ENCODE measurements at regions of chr13 and their contacts with region 1.

Region 1: DNA sequence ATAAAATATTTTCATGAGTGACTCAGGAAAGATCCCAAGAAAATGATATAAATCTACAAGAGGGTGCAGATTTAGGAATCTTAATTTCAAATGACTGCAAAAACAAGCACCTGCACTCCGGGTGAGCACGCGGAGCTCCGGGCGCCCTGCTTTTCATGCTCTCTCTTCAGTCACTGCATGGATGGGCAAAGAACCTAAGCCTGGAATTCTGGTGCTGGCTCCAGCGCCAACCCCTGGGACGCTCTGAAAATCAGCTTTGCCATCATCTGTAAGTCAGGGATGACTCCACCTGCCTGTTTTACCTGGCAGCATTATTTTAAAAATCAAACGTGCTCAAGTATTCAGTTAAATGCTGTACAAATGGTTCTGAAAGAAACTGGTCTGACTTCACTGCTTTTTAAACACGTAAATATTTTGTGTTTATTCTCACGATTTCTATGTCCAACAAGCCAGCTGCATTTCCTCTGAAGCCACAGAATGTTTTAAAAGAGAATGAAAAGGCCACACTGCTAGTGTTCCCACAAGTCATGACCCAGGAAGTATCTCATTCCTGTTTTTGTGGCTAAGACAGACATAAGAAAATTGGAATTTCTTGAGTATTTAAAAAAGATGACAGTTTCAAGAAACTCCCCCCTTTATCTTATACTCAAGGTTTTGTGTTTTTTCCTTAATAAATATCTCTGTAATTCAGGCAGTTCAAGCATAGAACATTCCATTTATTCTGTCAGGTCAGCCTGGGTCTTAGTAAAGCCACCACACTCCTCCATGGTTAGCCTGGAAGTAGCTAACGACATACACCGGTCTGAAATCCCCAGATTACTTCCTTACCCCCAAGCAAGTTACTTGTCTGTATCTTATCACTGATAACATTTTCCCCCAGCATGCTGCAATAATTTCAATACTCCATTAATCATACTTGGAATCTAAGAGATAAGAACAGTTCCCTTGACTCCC is 81.1 kb downstream of the COL4A1 start:
- DNase-seq: no peak
- H3K4me3 ChIP-seq: no peak overlapping the region
- H3K27ac ChIP-seq: peak overlapping the region in 2 of 3 donors; percentile 19 to 31
- H3K4me1 ChIP-seq: peaks cover 4 to 18% of the 10 kb centered on the region in 2 donors
- H3K27me3 ChIP-seq: no peaks in the 10 kb centered on the region
- CTCF ChIP-seq: no peak
- POLR2A ChIP-seq: no peak

Region 2: GRCh38 chr13:110330491-110331001 is 104.7 kb after region 1 on chr13:
- intact Hi-C with region 1: no loop called
- DNase-seq: peak; percentile 42
- H3K4me3 ChIP-seq: no peak overlapping the region
- H3K27ac ChIP-seq: peak overlapping the region; percentile 70 to 92 (median 90)
- H3K4me1 ChIP-seq: peaks cover 54 to 71% of the 10 kb centered on the region in 2 donors
- H3K27me3 ChIP-seq: no peaks in the 10 kb centered on the region
- CTCF ChIP-seq: no peak
- POLR2A ChIP-seq: no peak

Region 3: GRCh38 chr13:110444226-110444653 is 218.4 kb after region 1 on chr13:
- intact Hi-C with region 1: loop called (anchors 10 kb)
- DNase-seq: peak; percentile 60 to 62
- H3K4me3 ChIP-seq: no peak overlapping the region
- H3K27ac ChIP-seq: peak overlapping the region in 1 of 3 donors; percentile 12
- H3K4me1 ChIP-seq: peaks cover 3 to 4% of the 10 kb centered on the region in 2 donors
- H3K27me3 ChIP-seq: no peaks in the 10 kb centered on the region
- CTCF ChIP-seq: peak in 5 of 6 experiments; percentile 17 to 72 (median 50)
- POLR2A ChIP-seq: no peak